ENCODE measurements at regions of chr3 and their contacts with region 1.

Region 1: DNA sequence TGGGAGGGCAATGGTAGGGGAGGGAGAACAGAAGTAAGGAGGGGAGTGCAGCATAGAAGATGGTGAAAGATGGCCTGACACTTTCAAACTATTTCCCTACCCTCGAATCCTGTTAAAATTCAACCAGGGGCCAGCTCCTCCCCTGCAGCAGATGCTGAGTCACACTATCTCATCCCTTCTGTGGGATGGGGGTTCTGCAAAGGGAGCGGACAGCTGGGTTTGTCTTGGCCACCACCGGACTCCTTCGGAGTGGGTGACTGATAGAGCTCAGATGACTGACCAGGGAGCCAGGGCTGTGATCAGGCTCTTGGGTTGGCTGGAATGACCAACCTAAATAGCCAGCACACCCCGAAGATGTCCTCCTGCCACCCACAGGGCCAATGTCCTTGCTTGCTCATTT is 33.6 kb upstream of the TMCC1 start:
- DNase-seq: no peak
- ATAC-seq: 0 out of 2 replicates have a peak, but pooled peaks have one; percentile 45
- H3K4me3 ChIP-seq: no peak overlapping the region
- H3K27ac ChIP-seq: no peak overlapping the region
- H3K4me1 ChIP-seq: no peaks in the 10 kb centered on the region
- H3K27me3 ChIP-seq: no peaks in the 10 kb centered on the region
- CTCF ChIP-seq: no peak

Region 2: GRCh38 chr3:129893581-129894070 is 33.4 kb before region 1 on chr3 and contains the start of gene TMCC1:
- CTCF ChIA-PET with region 1: interaction called, 11 read pairs
- POLR2A ChIA-PET with region 1: no interaction called
- in situ Hi-C with region 1: no loop called
- intact Hi-C with region 1: no loop called
- DNase-seq: peak; percentile 32
- ATAC-seq: peak; percentile 94
- H3K4me3 ChIP-seq: peak within 1 kb of the TSS; percentile 75 to 92
- H3K27ac ChIP-seq: peak within 1 kb of the TSS; percentile 95
- H3K4me1 ChIP-seq: peaks cover 39% of the 10 kb centered on the region
- H3K27me3 ChIP-seq: no peaks in the 10 kb centered on the region
- CTCF ChIP-seq: no peak
- total RNA-seq, gene TMCC1: 33.2 TPM

Region 3: DNA sequence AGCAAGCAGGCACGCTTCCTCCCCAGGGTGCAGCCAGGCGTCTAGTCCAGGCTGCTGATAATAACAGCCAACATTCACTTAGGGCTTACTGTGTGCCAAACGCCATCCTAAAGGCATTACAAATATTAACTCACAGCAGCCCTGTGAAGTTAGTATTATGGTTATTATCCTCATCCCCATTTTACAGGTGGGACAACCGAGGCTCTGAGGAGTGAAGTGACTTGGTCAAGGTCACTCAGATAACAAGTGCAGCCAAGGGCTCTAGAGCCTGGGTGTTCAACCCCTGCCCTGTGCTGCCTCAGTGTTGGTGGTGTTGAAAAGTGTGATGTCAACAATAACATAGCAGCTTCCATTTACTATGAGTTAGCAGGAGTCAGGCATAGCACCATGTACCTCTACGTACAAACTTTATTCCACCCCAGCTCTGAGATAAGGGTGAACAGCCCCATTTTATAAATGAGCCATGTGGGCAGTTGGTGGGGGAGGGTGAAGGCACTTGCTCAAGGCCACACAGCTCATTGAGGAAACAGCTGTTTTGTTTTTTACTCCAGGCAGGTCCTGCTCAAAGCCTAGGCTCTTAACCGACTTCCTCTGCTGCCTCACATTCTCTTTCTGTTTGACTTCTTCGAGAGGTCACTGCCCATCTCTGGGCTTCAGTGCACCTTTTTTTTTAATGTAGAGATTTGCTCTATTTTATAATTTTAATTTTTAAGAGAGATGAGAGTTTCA is 23.4 kb after region 1 on chr3:
- CTCF ChIA-PET with region 1: no interaction called
- POLR2A ChIA-PET with region 1: interaction called, 16 read pairs
- in situ Hi-C with region 1: no loop called
- intact Hi-C with region 1: no loop called
- DNase-seq: no peak
- ATAC-seq: peak; percentile 26; the same call in 1 of the 2 replicates
- H3K4me3 ChIP-seq: no peak overlapping the region
- H3K27ac ChIP-seq: no peak overlapping the region
- H3K4me1 ChIP-seq: no peaks in the 10 kb centered on the region
- H3K27me3 ChIP-seq: peaks cover 7% of the 10 kb centered on the region; the same call in 1 of the 2 replicates
- CTCF ChIP-seq: no peak

Region 4: DNA sequence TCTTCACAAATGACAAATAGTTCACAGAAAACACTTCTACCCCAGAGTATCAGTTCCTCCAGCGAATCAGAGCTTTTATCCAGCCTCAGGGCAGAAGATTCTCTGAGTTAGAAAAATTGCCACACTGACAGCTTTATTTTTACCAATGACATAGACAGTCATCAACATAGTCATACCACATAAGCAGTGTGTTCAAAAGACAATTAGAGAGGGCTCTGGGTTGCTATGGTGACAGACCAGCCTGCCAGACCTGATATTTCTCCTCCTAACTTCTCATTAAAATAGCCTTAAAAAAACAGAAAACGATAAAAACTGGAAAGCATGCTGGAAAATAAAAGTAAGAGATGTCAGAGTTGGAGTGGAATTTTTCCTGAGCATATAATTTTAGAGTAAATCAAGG is 372.5 kb after region 1 on chr3:
- CTCF ChIA-PET with region 1: no interaction called
- POLR2A ChIA-PET with region 1: no interaction called
- in situ Hi-C with region 1: no loop called
- intact Hi-C with region 1: no loop called
- DNase-seq: no peak
- ATAC-seq: no peak
- H3K4me3 ChIP-seq: no peak overlapping the region
- H3K27ac ChIP-seq: no peak overlapping the region
- H3K4me1 ChIP-seq: no peaks in the 10 kb centered on the region
- H3K27me3 ChIP-seq: peaks cover 7% of the 10 kb centered on the region
- CTCF ChIP-seq: no peak